Ascending aorta (tissue), 2 donors: ENCODE measurements at regions of chr6 and their contacts with region 1.

Region 1: DNA sequence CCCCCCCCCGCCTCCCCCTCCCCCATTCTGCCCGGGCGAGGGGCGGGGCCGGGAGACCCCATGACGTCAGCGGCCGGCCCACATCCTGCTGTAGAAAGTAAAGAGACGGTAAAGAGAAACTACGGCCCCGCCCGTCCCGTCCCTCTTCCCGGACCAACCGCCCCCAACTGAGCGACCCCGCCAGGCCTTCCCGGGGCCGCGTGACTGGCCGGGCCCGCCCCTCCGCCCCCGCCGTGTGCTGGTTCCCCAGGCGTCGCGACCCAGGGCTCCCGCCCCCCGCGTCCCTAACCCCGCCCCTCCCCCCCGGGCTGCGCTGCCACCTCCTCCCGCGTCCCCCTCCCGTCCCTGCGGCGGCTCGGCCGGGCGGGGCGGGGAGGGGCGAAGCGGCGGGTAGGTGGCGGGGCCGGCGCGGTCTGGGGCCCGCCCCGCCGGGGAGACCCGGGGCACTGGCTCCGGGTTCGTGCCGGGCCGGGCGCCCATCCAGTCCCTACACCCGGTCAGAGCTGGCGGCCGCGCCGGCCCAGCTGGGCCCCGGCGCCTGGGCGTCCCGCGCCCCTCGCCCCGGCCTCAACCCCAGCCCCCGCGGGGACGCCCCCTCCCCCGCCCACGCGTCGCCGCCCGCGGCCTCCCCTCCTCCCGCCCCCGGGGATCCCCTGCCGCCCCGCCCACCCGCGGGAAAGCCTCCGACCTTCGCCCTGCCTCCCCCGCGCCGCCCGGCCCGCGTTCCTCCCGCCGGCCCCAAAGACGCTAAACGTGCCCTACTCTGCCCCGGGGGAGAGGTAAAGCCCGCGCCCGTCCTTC is 636 bp upstream of the HIVEP1 start:
- DNase-seq: peak; percentile 91 to 99
- H3K4me3 ChIP-seq: peak overlapping the region; percentile 85 to 97
- H3K27ac ChIP-seq: peak overlapping the region; percentile 98 to 99
- H3K4me1 ChIP-seq: peaks cover 6 to 12% of the 10 kb centered on the region in 2 donors
- H3K27me3 ChIP-seq: no peaks in the 10 kb centered on the region
- CTCF ChIP-seq: no peak

Region 2: GRCh38 chr6:11585426-11586016 is 426.0 kb before region 1 on chr6:
- intact Hi-C with region 1: loop called (anchors 2 kb)
- DNase-seq: no peak
- H3K4me3 ChIP-seq: no peak overlapping the region
- H3K27ac ChIP-seq: no peak overlapping the region
- H3K4me1 ChIP-seq: peaks cover 0 to 21% of the 10 kb centered on the region in 2 donors
- H3K27me3 ChIP-seq: no peaks in the 10 kb centered on the region
- CTCF ChIP-seq: peak; percentile 52 to 68 (median 58)

Region 3: GRCh38 chr6:11766589-11767450 is 244.7 kb before region 1 on chr6:
- intact Hi-C with region 1: loop called (anchors 2 kb)
- DNase-seq: peak in 1 of 2 donors; percentile 83
- H3K4me3 ChIP-seq: no peak overlapping the region
- H3K27ac ChIP-seq: peak overlapping the region; percentile 81 to 84
- H3K4me1 ChIP-seq: peaks cover 22 to 79% of the 10 kb centered on the region in 2 donors
- H3K27me3 ChIP-seq: no peaks in the 10 kb centered on the region
- CTCF ChIP-seq: no peak

Region 4: GRCh38 chr6:11968241-11968806 is 43.2 kb before region 1 on chr6:
- intact Hi-C with region 1: no loop called
- DNase-seq: no peak
- H3K4me3 ChIP-seq: no peak overlapping the region
- H3K27ac ChIP-seq: no peak overlapping the region
- H3K4me1 ChIP-seq: no peaks in the 10 kb centered on the region
- H3K27me3 ChIP-seq: no peaks in the 10 kb centered on the region
- CTCF ChIP-seq: no peak

Region 5: GRCh38 chr6:12233693-12234571 is 222.5 kb after region 1 on chr6:
- intact Hi-C with region 1: no loop called
- DNase-seq: peak in 1 of 2 donors; percentile 68
- H3K4me3 ChIP-seq: no peak overlapping the region
- H3K27ac ChIP-seq: peak overlapping the region in 1 of 2 donors; percentile 23
- H3K4me1 ChIP-seq: peaks cover 0 to 2% of the 10 kb centered on the region in 2 donors
- H3K27me3 ChIP-seq: no peaks in the 10 kb centered on the region
- CTCF ChIP-seq: peak; percentile 76 to 86 (median 85)

Region 6: GRCh38 chr6:12289933-12290820 is 278.7 kb after region 1 on chr6 and contains the start of gene EDN1:
- intact Hi-C with region 1: loop called (anchors 5 kb)
- DNase-seq: peak in 1 of 2 donors; percentile 85
- H3K4me3 ChIP-seq: peak within 1 kb of the TSS; percentile 48 to 69
- H3K27ac ChIP-seq: peak within 1 kb of the TSS; percentile 19 to 65
- H3K4me1 ChIP-seq: peaks cover 4 to 23% of the 10 kb centered on the region in 2 donors
- H3K27me3 ChIP-seq: no peaks in the 10 kb centered on the region
- CTCF ChIP-seq: peak; percentile 31 to 61 (median 48)
- total RNA-seq, gene EDN1: 27.8 TPM